KBM-7 (cell line): ENCODE measurements at regions of chr16 and their contacts with region 1.

Region 1: GRCh38 chr16:53945996-53946395 is 242.0 kb downstream of the FTO start:
- DNase-seq: peak; percentile 87

Region 2: GRCh38 chr16:53881371-53881770 is 64.6 kb before region 1 on chr16:
- in situ Hi-C with region 1: loop called (anchors 10 kb)
- DNase-seq: no peak

Region 3: GRCh38 chr16:54062361-54063278 is 116.6 kb after region 1 on chr16:
- in situ Hi-C with region 1: no loop called
- DNase-seq: no peak

Region 4: GRCh38 chr16:54929090-54930004 is 983.4 kb after region 1 on chr16:
- in situ Hi-C with region 1: loop called (anchors 25 kb)
- DNase-seq: peak; percentile 99